ENCODE measurements at regions of chr6 and their contacts with region 1.

Region 1: GRCh38 chr6:149082286-149082707 is 235.2 kb upstream of the TAB2 start:
- DNase-seq: peak; percentile 75
- ATAC-seq: peak; percentile 50
- H3K4me3 ChIP-seq: no peak overlapping the region
- H3K27ac ChIP-seq: no peak overlapping the region
- H3K4me1 ChIP-seq: peaks cover 13% of the 10 kb centered on the region
- H3K27me3 ChIP-seq: peaks cover 5% of the 10 kb centered on the region
- CTCF ChIP-seq: peak; percentile 79
- POLR2A ChIP-seq: no peak
- RAD21 ChIP-seq: peak; percentile 82

Region 2: DNA sequence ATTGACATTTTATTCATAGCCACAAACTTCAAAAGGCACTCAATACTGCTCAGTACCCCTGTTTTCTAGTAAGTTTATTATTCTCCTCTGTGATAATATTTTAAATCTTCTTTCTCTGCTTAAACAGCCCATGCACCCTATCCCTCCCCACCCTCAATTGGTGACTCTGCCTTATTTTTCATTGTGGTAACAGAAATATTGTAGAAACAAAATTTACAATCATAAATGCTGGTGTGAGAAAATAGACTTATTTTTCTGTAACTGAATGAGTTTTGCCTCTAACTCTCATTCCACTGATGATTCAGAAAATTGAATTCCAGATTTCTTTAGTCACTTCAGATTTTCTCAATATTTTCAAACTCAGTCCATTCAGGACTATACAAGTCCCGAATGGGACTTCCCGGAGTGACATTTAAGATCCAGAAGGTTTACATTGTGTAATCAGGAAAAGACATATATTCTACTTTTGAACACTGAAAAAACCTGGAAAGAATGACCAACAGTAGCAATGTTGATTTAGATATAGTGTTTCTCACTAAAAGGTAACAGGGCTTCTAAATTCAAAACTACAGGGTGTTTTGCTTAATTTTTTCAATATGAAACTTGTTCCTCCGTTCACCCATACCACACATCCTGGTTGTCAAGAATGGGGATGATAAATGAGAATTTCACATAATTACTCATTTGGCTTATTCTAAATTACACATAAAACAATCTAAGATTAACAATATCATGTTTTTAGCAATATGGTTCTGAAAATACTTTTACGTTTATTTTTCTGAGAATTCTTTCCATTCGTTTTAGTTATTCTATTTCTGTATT is 370.3 kb before region 1 on chr6:
- CTCF ChIA-PET with region 1: no interaction called
- POLR2A ChIA-PET with region 1: no interaction called
- dilution Hi-C with region 1: no loop called
- in situ Hi-C with region 1: no loop called
- intact Hi-C with region 1: no loop called
- DNase-seq: peak; percentile 57
- ATAC-seq: peak; percentile 62; the same call in 1 of the 2 replicates
- H3K4me3 ChIP-seq: no peak overlapping the region
- H3K27ac ChIP-seq: no peak overlapping the region
- H3K4me1 ChIP-seq: peaks cover 3% of the 10 kb centered on the region; the same call in 1 of the 2 replicates
- H3K27me3 ChIP-seq: no peaks in the 10 kb centered on the region
- CTCF ChIP-seq: no peak
- POLR2A ChIP-seq: no peak
- RAD21 ChIP-seq: no peak

Region 3: GRCh38 chr6:148746363-148747144 is 335.7 kb before region 1 on chr6 and contains the start of gene UST:
- CTCF ChIA-PET with region 1: no interaction called
- POLR2A ChIA-PET with region 1: no interaction called
- dilution Hi-C with region 1: no loop called
- in situ Hi-C with region 1: no loop called
- intact Hi-C with region 1: loop called (anchors 5 kb)
- DNase-seq: peak; percentile 95
- ATAC-seq: peak; percentile 92
- H3K4me3 ChIP-seq: peak within 1 kb of the TSS; percentile 87
- H3K27ac ChIP-seq: peak within 1 kb of the TSS; percentile 90
- H3K4me1 ChIP-seq: peaks cover 4% of the 10 kb centered on the region
- H3K27me3 ChIP-seq: no peaks in the 10 kb centered on the region
- CTCF ChIP-seq: peak; percentile 58
- POLR2A ChIP-seq: peak; percentile 57; the same call in 1 of the 2 replicates
- RAD21 ChIP-seq: peak; percentile 69
- total RNA-seq, gene UST: 13.8 and 14.4 TPM in 2 replicates

Region 4: DNA sequence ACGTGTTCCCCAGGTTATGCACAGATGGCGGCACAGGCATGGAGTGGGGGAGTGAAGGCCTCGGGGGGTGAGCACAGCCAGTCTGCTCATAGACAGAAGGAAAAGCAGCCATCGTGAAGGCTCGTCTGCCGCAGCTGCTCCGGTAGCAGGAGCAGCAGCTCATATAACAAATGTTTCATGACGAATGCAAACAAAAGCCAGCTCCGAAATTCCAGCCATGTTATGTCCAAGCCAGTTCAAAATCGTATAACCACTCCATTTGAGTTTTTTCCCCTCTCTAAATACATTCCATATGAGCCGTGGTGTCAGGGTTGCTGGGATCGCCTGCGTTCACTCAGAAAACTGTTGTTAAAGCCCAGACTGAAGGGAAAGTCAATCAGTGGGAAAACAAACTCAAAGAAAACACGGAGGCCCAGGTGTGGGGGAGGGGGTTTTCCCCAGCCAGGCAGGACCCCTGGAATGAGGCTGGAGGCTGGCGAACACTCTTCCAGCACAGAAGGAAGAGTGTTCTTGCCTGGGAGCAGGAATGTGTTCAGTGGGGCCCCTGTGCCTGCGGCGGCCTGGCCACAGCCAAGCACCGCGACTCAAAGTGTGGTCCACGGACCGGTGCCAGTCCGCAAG is 45.1 kb before region 1 on chr6:
- CTCF ChIA-PET with region 1: interaction called, 4 read pairs
- POLR2A ChIA-PET with region 1: no interaction called
- dilution Hi-C with region 1: no loop called
- in situ Hi-C with region 1: no loop called
- intact Hi-C with region 1: loop called (anchors 2 kb)
- DNase-seq: peak; percentile 89
- ATAC-seq: peak; percentile 70
- H3K4me3 ChIP-seq: peak overlapping the region; percentile 6; the same call in 1 of the 2 replicates
- H3K27ac ChIP-seq: peak overlapping the region; percentile 94
- H3K4me1 ChIP-seq: peaks cover 22% of the 10 kb centered on the region
- H3K27me3 ChIP-seq: no peaks in the 10 kb centered on the region
- CTCF ChIP-seq: no peak
- POLR2A ChIP-seq: no peak
- RAD21 ChIP-seq: no peak

Region 5: GRCh38 chr6:149316798-149317655 is 234.7 kb after region 1 on chr6:
- CTCF ChIA-PET with region 1: no interaction called
- POLR2A ChIA-PET with region 1: no interaction called
- dilution Hi-C with region 1: no loop called
- in situ Hi-C with region 1: no loop called
- intact Hi-C with region 1: loop called (anchors 1 kb)
- DNase-seq: peak; percentile 89
- ATAC-seq: peak; percentile 90
- H3K4me3 ChIP-seq: peak overlapping the region; percentile 99
- H3K27ac ChIP-seq: peak overlapping the region; percentile 97
- H3K4me1 ChIP-seq: peaks cover 4% of the 10 kb centered on the region
- H3K27me3 ChIP-seq: no peaks in the 10 kb centered on the region; the same call in 1 of the 2 replicates
- CTCF ChIP-seq: no peak
- POLR2A ChIP-seq: peak; percentile 63; the same call in 1 of the 2 replicates
- RAD21 ChIP-seq: 0 out of 2 replicates have a peak, but pooled peaks have one; percentile 8

Region 6: DNA sequence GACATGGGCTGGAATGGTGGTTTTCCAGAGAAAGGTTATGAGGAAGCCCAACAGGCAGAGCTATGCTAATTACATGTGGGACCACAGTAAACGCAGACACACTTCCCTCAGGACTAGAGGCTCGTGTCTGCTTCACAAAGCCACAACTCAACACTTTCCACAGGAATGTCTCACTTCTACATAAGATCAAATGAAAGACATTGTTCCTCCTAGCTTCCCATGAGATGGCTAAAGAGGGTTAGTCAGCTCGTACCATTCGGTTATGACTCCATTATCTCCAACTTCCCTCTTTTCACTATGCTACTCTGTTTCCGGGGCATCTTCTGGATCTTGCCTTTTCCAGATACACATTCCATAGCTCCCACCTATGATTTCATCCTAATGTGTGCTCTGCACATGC is 431.6 kb after region 1 on chr6:
- CTCF ChIA-PET with region 1: interaction called, 3 read pairs
- POLR2A ChIA-PET with region 1: no interaction called
- dilution Hi-C with region 1: no loop called
- in situ Hi-C with region 1: no loop called
- intact Hi-C with region 1: loop called (anchors 1 kb)
- DNase-seq: no peak
- ATAC-seq: no peak
- H3K4me3 ChIP-seq: no peak overlapping the region
- H3K27ac ChIP-seq: no peak overlapping the region
- H3K4me1 ChIP-seq: no peaks in the 10 kb centered on the region
- H3K27me3 ChIP-seq: no peaks in the 10 kb centered on the region
- CTCF ChIP-seq: no peak
- POLR2A ChIP-seq: no peak
- RAD21 ChIP-seq: no peak

Measured in IMR-90 (cell line).